Common myeloid progenitor, CD34-positive (primary cell): ENCODE measurements at regions of chr11 and their contacts with region 1.

Region 1: GRCh38 chr11:102614485-102614884 is 10.6 kb downstream of the MMP20 start:
- DNase-seq: peak in 2 of 3 donors; percentile 14 to 28
- H3K4me3 ChIP-seq: no peak overlapping the region
- H3K27ac ChIP-seq: no peak overlapping the region
- H3K4me1 ChIP-seq: no peaks in the 10 kb centered on the region
- H3K27me3 ChIP-seq: no peaks in the 10 kb centered on the region

Region 2: DNA sequence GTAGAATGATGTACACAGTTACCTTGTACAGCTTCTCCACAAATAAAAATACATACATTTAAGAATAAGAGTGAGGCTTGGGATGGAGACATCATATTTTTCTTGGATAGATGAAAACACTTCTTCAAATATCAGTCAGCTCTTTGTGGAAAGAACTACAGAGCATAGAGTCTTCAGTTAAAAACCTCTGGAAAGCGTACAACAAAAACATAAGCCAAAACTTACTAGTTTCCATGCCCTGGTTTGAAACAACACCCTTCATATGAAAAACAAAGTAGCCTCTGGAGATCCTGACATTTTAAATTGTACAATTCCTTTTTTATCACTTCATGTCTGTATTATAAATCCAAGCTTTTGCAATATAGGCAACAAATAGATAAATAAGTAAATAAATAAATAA is 706.7 kb before region 1 on chr11:
- CTCF ChIA-PET with region 1: no interaction called
- POLR2A ChIA-PET with region 1: no interaction called
- DNase-seq: no peak
- H3K4me3 ChIP-seq: no peak overlapping the region
- H3K27ac ChIP-seq: no peak overlapping the region
- H3K4me1 ChIP-seq: no peaks in the 10 kb centered on the region
- H3K27me3 ChIP-seq: peaks cover 2 to 4% (median 3%) of the 10 kb centered on the region in 5 experiments

Region 3: GRCh38 chr11:102287964-102288724 is 326.3 kb before region 1 on chr11:
- CTCF ChIA-PET with region 1: interaction called, 18 read pairs
- POLR2A ChIA-PET with region 1: no interaction called
- DNase-seq: peak; percentile 76 to 82 (median 82)
- H3K4me3 ChIP-seq: peak overlapping the region in 6 of 7 experiments; percentile 7 to 79 (median 46)
- H3K27ac ChIP-seq: no peak overlapping the region
- H3K4me1 ChIP-seq: peaks cover 4 to 26% (median 14%) of the 10 kb centered on the region in 4 experiments
- H3K27me3 ChIP-seq: no peaks in the 10 kb centered on the region

Region 4: GRCh38 chr11:102341844-102342318 is 272.6 kb before region 1 on chr11:
- CTCF ChIA-PET with region 1: interaction called, 41 read pairs
- POLR2A ChIA-PET with region 1: no interaction called
- DNase-seq: peak; percentile 95 to 98 (median 96)
- H3K4me3 ChIP-seq: no peak overlapping the region
- H3K27ac ChIP-seq: peak overlapping the region in 1 of 2 experiments; percentile 45
- H3K4me1 ChIP-seq: peaks cover 8 to 18% (median 15%) of the 10 kb centered on the region in 4 experiments
- H3K27me3 ChIP-seq: no peaks in the 10 kb centered on the region

Region 5: DNA sequence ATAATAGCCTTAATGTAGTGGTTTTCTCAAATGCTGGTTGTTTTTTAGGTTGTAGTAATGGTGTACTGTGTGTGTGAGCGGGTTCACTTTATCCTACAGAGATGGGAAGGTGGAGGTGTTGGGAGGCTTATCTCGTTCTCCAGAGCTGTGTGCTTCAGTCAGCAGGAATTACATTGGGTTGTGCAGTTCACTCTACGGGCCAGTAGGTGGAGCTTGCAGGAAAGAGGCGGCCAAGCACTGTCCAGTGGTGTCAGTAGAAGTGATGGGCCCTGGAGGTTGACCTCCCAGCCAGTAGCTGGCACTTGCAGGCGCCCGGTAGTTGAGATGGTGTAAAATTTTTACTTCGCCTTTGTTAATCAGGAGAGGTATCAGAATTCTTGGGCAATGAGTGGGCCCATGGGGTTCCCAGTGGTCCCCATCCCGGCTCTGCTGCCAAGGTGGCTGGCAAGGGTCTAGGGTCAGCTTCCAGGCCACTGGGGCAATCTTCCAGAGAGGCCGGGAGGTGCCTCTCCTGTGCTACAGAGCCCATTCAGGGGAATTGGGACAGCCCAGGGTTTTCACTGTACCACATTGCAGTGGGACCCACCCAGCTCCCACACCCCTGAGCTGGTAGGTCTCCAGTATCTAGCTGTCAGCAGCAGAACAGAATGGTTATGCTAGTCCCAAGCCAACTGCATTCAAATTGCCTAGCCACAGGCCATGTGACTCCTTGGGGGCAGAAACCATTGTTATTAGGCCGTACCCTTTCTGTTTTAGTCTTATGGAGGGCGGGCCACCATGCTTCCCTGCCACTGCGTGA is 223.6 kb before region 1 on chr11:
- CTCF ChIA-PET with region 1: interaction called, 54 read pairs
- POLR2A ChIA-PET with region 1: no interaction called
- DNase-seq: peak; percentile 44 to 61 (median 52)
- H3K4me3 ChIP-seq: no peak overlapping the region
- H3K27ac ChIP-seq: no peak overlapping the region
- H3K4me1 ChIP-seq: peaks cover 0 to 4% (median 3%) of the 10 kb centered on the region in 4 experiments
- H3K27me3 ChIP-seq: no peaks in the 10 kb centered on the region

Region 6: DNA sequence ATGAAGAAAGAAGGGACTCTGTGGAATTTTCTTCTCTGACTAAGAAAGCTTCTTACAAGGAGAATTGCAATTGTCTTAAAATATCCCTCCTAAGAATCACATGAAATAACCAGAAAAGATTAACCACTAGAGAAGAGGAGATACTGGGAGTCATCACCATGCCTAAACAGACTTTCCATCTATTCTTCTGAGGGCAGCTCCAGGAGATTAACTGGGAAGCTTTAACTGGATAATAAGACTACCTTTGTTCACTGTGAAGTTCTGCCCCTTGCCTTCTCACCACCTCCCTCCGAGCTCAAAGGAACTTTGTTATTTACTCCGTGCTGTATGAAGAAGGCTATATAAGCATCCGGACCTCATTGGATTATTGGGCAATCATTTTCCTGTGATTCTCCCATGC is 59.4 kb before region 1 on chr11:
- CTCF ChIA-PET with region 1: interaction called, 10 read pairs
- POLR2A ChIA-PET with region 1: no interaction called
- DNase-seq: no peak
- H3K4me3 ChIP-seq: no peak overlapping the region
- H3K27ac ChIP-seq: no peak overlapping the region
- H3K4me1 ChIP-seq: peaks cover 5 to 10% (median 8%) of the 10 kb centered on the region in 4 experiments
- H3K27me3 ChIP-seq: no peaks in the 10 kb centered on the region